ENCODE measurements at regions of chr7 and their contacts with region 1.

Region 1: DNA sequence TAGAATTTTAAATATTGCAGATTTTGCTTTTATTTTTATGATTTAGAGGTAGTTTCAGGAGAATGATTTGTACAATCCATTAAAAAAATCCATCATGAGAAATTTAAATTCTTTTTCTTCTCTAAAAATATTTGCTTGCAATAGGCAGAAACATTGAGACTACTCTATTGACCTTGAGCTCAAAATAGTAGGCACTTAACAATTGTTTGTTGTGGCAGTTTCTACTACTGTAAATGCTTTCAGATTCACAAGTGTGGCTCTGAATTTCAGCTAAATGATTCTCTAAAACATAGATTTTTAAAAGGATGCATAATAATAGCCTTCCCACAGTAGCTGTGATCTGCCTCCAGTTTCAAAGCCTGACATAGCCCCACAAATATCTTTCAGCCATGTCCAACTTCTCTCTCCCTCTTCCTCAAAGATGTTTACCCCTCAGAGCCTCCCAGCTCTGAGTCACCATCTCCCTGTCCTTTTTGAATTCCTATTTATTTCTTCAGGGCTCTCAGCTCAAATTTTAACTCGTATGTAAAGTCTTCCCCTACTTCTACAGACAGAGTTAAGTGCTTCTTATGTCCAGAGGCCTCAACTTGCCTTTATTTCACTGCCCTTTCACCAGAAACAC is 160.5 kb downstream of the AOAH start:
- DNase-seq: no peak
- ATAC-seq: no peak
- H3K4me3 ChIP-seq: no peak overlapping the region
- H3K27ac ChIP-seq: no peak overlapping the region
- H3K4me1 ChIP-seq: no peaks in the 10 kb centered on the region
- H3K27me3 ChIP-seq: peaks cover 8 to 17% of the 10 kb centered on the region in 2 experiments; a peak in 3 of 5 replicates
- CTCF ChIP-seq: no peak
- EP300 ChIP-seq: no peak
- POLR2A ChIP-seq: no peak
- RAD21 ChIP-seq: no peak

Region 2: GRCh38 chr7:35316549-35316948 is 1247.3 kb before region 1 on chr7:
- CTCF ChIA-PET with region 1: no interaction called
- POLR2A ChIA-PET with region 1: no interaction called
- in situ Hi-C with region 1: no loop called
- intact Hi-C with region 1: loop called (anchors 5 kb)
- DNase-seq: no peak
- ATAC-seq: no peak
- H3K4me3 ChIP-seq: no peak overlapping the region
- H3K27ac ChIP-seq: no peak overlapping the region
- H3K4me1 ChIP-seq: no peaks in the 10 kb centered on the region
- H3K27me3 ChIP-seq: no peaks in the 10 kb centered on the region
- CTCF ChIP-seq: no peak
- EP300 ChIP-seq: no peak
- POLR2A ChIP-seq: no peak
- RAD21 ChIP-seq: no peak

Region 3: DNA sequence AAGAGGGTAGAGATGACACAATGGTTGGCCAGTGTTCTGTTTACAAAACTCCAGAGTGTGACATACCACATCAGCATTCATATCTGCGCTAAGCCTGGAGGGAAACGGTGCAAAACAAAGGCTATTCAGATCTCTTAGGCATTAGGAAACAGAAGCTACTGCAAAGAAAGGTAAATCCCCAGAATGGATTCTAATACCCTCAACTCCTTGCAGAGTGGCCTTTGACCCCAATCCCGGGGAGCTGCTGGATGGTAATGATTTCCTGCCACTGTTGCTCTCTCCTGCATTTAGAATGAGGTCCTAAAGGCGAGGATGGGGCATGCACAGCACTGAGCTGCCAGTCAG is 95.3 kb after region 1 on chr7:
- CTCF ChIA-PET with region 1: no interaction called
- POLR2A ChIA-PET with region 1: no interaction called
- in situ Hi-C with region 1: no loop called
- intact Hi-C with region 1: no loop called
- DNase-seq: no peak
- ATAC-seq: no peak
- H3K4me3 ChIP-seq: no peak overlapping the region
- H3K27ac ChIP-seq: no peak overlapping the region
- H3K4me1 ChIP-seq: no peaks in the 10 kb centered on the region
- H3K27me3 ChIP-seq: peaks cover 16 to 19% of the 10 kb centered on the region in 2 experiments; a peak in 4 of 5 replicates
- CTCF ChIP-seq: no peak
- EP300 ChIP-seq: no peak
- POLR2A ChIP-seq: no peak
- RAD21 ChIP-seq: no peak